Caco-2 (cell line): ENCODE measurements at regions of chr12 and their contacts with region 1.

Region 1: GRCh38 chr12:21677622-21678277 is 20.1 kb upstream of the LDHB start:
- DNase-seq: no peak
- H3K4me3 ChIP-seq: no peak overlapping the region
- H3K4me3 Mint-ChIP-seq: no peak overlapping the region
- H3K27ac Mint-ChIP-seq: no peak overlapping the region
- H3K4me1 ChIP-seq: no peaks in the 10 kb centered on the region; the same call in 1 of the 2 replicates
- H3K4me1 Mint-ChIP-seq: peaks cover 20% of the 10 kb centered on the region
- H3K27me3 ChIP-seq: no peaks in the 10 kb centered on the region
- H3K27me3 Mint-ChIP-seq: no peaks in the 10 kb centered on the region
- CTCF ChIP-seq: no peak

Region 2: DNA sequence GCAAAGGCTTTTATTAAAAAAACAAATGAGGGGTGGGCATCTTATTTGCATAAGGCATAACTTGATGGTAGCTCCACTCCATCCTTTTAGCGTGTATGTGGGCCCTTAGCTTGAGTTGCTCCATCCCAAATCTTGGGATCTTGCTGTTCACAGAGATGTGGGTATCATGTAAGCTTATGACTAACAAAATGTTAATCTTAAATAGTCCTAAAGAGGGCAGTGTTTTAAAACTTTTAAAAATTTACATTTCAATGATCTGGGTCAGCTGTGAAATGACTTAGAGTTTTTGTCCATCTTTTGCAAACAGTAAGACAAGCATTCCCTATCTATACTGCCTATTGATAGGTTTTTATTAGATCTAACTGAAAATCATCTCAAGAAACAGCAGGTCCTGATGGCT is 429.1 kb before region 1 on chr12:
- CTCF ChIA-PET with region 1: interaction called, 5 read pairs
- POLR2A ChIA-PET with region 1: no interaction called
- intact Hi-C with region 1: loop called (anchors 1 kb)
- DNase-seq: no peak
- H3K4me3 ChIP-seq: no peak overlapping the region
- H3K4me3 Mint-ChIP-seq: no peak overlapping the region
- H3K27ac Mint-ChIP-seq: no peak overlapping the region
- H3K4me1 ChIP-seq: no peaks in the 10 kb centered on the region
- H3K4me1 Mint-ChIP-seq: no peaks in the 10 kb centered on the region
- H3K27me3 ChIP-seq: no peaks in the 10 kb centered on the region
- H3K27me3 Mint-ChIP-seq: peaks cover 7% of the 10 kb centered on the region
- CTCF ChIP-seq: peak in 1 of 2 experiments; percentile 39

Region 3: GRCh38 chr12:21308785-21309184 is 369.0 kb before region 1 on chr12:
- CTCF ChIA-PET with region 1: no interaction called
- POLR2A ChIA-PET with region 1: no interaction called
- intact Hi-C with region 1: loop called (anchors 1 kb)
- DNase-seq: no peak
- H3K4me3 ChIP-seq: no peak overlapping the region
- H3K4me3 Mint-ChIP-seq: no peak overlapping the region
- H3K27ac Mint-ChIP-seq: no peak overlapping the region
- H3K4me1 ChIP-seq: no peaks in the 10 kb centered on the region
- H3K4me1 Mint-ChIP-seq: no peaks in the 10 kb centered on the region
- H3K27me3 ChIP-seq: no peaks in the 10 kb centered on the region; the same call in 1 of the 2 replicates
- H3K27me3 Mint-ChIP-seq: peaks cover 21% of the 10 kb centered on the region
- CTCF ChIP-seq: no peak

Region 4: GRCh38 chr12:21501379-21501956 is 176.3 kb before region 1 on chr12 and contains the starts of genes GOLT1B and RECQL:
- CTCF ChIA-PET with region 1: interaction called, 4 read pairs
- POLR2A ChIA-PET with region 1: no interaction called
- intact Hi-C with region 1: loop called (anchors 2 kb)
- DNase-seq: peak; percentile 98
- H3K4me3 ChIP-seq: peak within 1 kb of the TSS; percentile 70
- H3K4me3 Mint-ChIP-seq: no peak within 1 kb of the TSS
- H3K27ac Mint-ChIP-seq: no peak within 1 kb of the TSS
- H3K4me1 ChIP-seq: no peaks in the 10 kb centered on the region; the same call in 1 of the 2 replicates
- H3K4me1 Mint-ChIP-seq: peaks cover 9% of the 10 kb centered on the region
- H3K27me3 ChIP-seq: no peaks in the 10 kb centered on the region
- H3K27me3 Mint-ChIP-seq: no peaks in the 10 kb centered on the region
- CTCF ChIP-seq: no peak
- total RNA-seq, gene GOLT1B: 75.9 and 81.7 TPM in 2 replicates
- total RNA-seq, gene RECQL: 50.7 and 55.3 TPM in 2 replicates

Region 5: DNA sequence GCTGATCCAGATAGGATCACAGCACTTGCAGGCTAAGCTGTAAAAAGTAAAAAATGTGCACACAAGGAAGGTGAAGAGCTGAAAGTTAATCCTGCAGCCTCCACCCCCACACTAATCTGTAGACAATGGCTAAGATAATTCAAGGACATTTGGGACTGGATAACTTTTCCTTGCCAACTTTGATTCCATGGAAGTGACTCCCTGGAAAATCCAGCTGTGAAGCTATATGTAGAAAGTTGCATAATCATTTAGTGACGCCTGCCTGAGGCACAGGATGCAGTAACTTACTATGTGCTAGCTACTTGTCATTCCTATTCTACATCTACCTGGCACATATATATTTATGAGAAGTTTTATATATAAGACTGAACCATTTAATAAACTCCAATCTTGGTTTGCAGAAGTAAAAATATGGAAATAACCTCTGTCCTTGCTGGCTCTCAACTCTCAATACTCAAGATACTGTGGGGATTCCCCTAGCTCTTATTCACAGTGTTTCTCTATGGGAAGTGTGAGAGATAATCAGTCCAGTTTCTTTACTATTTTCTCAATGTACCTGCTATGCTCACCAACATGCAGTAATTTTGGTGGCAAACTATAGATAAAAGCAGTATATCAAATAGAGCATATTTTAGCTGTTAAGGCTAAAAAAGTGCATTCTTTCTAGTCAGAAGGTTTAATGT is 34.9 kb before region 1 on chr12:
- CTCF ChIA-PET with region 1: interaction called, 3 read pairs
- POLR2A ChIA-PET with region 1: interaction called, 5 read pairs
- intact Hi-C with region 1: loop called (anchors 2 kb)
- DNase-seq: no peak
- H3K4me3 ChIP-seq: no peak overlapping the region
- H3K4me3 Mint-ChIP-seq: no peak overlapping the region
- H3K27ac Mint-ChIP-seq: no peak overlapping the region
- H3K4me1 ChIP-seq: peaks cover 86% of the 10 kb centered on the region
- H3K4me1 Mint-ChIP-seq: peaks cover 76% of the 10 kb centered on the region
- H3K27me3 ChIP-seq: no peaks in the 10 kb centered on the region
- H3K27me3 Mint-ChIP-seq: no peaks in the 10 kb centered on the region
- CTCF ChIP-seq: no peak